ENCODE measurements at regions of chr5 and their contacts with region 1.

Region 1: DNA sequence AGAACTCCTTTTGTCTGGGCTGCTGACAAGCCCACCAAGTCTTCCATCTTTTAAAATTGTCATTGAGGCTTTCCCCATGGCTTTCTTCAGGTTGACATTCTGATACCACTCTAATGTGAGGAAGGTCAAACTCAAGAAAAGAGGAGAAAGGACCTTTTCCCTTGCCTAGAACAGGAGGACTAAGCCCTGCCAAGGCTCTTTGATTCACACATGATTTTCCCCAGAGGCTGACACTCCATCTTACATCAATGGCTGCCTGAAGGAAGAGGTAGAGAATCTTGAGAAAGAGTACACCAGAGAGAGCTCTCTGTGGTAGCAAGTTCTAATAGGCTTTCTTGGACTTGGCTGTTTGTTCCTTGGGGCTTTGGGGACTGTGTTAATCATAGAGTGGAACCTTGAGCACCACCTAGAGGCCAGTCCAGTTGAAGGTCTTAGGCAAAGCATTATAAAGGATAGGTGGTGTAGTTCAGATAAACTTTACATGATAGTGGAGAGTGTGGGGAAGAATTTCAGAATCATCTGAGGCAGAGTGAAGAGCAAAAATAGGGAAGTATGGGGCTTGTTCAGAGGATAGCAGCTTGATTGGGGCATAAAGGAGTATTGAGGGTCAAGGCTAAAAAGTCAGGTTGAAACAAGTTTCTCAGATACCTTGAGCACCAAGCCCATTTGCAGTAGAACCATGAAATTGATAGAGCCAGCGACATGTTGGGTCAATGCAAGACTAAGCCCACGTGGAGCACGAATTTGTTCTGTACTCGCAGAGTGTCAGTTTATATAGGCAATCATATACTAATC is 36.7 kb downstream of the NDFIP1 start:
- DNase-seq: no peak
- H3K4me3 ChIP-seq: no peak overlapping the region
- H3K27ac ChIP-seq: no peak overlapping the region
- H3K4me1 ChIP-seq: peaks cover 15% of the 10 kb centered on the region
- H3K27me3 ChIP-seq: no peaks in the 10 kb centered on the region
- CTCF ChIP-seq: peak; percentile 82

Region 2: GRCh38 chr5:141691867-141692532 is 453.3 kb before region 1 on chr5:
- intact Hi-C with region 1: loop called (anchors 10 kb)
- DNase-seq: peak; percentile 87
- H3K4me3 ChIP-seq: peak overlapping the region; percentile 53
- H3K27ac ChIP-seq: peak overlapping the region; percentile 20
- H3K4me1 ChIP-seq: peaks cover 33% of the 10 kb centered on the region
- H3K27me3 ChIP-seq: no peaks in the 10 kb centered on the region
- CTCF ChIP-seq: peak; percentile 100

Region 3: DNA sequence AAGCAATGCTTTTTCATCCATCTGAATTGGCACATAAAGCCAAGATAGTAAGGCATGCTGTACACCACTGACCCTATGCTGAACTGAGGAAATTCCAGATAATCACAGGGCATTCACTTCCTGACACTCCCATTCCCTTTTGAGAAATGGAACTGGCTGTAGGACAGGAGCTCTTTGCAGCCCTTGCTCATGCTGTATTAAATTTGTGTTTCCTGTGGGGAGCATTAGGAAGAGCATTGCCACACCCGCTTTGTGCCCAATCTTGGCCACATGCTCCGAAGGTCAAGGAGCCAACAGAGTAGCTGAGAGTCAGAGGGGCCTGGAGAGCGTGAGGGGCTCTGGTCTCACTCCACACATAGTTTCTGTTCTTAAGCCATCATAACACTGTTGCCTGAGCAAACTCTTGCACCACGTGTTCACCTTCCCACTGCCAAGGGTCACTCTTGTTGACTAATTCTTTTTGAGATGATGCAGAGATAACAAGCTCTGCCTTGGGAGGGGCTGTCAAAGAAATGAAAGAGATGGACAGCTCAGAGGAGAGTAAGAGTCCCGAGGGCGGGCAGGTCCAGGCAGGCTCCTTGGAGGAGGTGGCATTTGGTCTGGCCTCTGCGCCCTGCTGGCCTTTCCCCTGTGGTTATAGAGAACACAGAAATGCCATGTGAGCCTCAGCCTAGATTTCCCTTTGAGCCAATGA is 431.5 kb before region 1 on chr5:
- intact Hi-C with region 1: no loop called
- DNase-seq: no peak
- H3K4me3 ChIP-seq: no peak overlapping the region
- H3K27ac ChIP-seq: peak overlapping the region; percentile 45
- H3K4me1 ChIP-seq: peaks cover 21% of the 10 kb centered on the region
- H3K27me3 ChIP-seq: peaks cover 53% of the 10 kb centered on the region
- CTCF ChIP-seq: no peak

Region 4: DNA sequence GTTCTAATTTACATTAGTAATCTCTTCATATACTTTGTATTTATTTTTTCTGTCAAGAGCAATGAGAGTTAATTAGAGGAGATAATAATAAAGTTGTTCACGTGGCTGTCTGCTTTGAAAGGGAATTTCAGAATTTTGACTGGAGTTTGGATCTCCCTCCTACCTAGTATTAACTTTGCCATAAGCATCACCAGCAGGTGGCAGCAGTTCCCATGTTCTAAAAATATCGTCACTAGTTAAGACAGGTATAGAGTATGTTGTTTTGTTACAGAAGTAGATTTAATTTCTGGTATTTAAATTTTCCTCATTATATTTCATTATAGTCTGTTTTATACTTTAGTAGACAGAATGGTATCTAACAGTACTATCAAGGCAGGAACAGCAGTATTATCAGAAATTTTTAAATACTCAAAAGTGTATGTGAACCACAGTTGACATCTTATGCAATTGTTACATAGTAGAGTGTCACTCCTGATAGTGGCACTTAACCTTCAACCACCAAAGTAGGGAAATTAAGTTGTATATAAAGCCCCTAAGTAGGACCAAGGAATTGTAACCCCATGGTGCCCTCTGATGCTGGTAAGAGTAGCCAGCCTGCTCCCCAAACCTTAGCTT is 152.8 kb before region 1 on chr5:
- intact Hi-C with region 1: loop called (anchors 5 kb)
- DNase-seq: peak; percentile 55
- H3K4me3 ChIP-seq: no peak overlapping the region
- H3K27ac ChIP-seq: peak overlapping the region; percentile 17
- H3K4me1 ChIP-seq: peaks cover 12% of the 10 kb centered on the region
- H3K27me3 ChIP-seq: no peaks in the 10 kb centered on the region
- CTCF ChIP-seq: peak; percentile 83

Measured in left ventricle myocardium inferior (tissue), 1 donor.